ENCODE measurements at regions of chr12 and their contacts with region 1.

Region 1: DNA sequence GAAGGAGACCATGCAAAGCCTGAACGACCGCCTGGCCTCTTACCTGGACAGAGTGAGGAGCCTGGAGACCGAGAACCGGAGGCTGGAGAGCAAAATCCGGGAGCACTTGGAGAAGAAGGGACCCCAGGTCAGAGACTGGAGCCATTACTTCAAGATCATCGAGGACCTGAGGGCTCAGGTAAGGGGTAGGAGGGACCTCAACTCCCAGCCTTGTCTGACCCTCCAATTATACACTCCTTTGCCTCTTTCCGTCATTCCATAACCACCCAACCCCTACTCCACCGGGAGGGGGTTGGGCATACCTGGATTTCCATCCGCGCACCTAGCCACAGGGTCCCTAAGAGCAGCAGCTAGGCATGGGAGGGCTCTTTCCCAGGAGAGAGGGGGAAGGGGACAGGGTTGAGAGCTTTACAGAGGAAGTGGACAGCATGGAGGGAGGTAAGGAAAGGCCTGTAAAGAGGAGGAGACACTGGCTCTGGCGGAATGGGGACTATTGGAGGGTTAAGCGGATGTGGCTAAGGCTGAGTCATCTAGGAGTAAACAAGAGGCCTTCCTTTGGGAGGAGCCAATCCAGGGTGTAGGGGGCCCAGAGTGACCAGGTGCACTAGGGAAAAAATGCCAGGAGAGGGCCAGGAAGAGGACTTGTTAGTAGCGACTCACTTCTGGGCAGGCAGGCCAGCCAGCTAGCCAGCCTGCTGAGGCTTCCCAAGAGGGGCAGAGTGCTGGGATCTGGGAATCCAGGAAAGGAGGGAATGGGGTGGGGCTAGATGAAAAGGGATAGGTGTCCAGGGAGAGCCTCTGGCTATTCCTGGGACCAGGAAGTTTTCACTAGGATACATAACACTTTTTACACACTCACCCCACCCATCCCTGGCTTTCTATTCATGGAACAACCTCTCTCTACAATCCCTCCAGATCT is 754 bp downstream of the KRT18 start:
- DNase-seq: peak; percentile 83
- H3K4me3 Mint-ChIP-seq: peak overlapping the region; percentile 87
- H3K27ac Mint-ChIP-seq: peak overlapping the region; percentile 97
- H3K4me1 Mint-ChIP-seq: peaks cover 25% of the 10 kb centered on the region
- H3K27me3 Mint-ChIP-seq: no peaks in the 10 kb centered on the region
- CTCF ChIP-seq: no peak

Region 2: DNA sequence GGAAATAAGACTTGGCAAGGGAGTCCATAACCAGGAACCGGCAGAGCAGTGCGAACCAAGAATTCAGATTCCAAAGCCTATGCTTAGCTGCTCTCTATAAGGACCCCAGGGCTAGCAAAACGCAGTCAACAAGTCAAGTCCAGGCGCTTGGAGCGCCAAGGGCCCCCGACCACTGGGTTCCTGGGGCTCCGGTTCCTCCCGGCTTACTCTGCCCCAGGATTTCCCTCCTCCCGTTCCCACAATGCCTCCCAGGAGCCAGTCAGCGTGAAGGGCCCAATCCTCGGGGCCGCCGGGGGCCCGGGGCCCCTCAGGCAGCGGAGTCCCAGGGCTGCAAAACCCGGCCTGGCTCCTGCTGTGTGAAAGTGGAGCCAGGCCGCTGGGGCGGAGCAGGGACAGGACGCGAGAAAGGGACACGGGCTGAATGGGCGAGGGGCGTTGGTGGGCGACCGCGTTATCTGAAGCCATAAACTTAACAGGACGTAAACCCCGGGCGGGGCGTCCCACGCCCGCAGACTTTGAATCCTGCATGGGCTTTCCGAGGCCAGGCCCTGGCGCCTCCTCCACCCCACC is 46.3 kb before region 1 on chr12:
- CTCF ChIA-PET with region 1: interaction called, 10 read pairs
- intact Hi-C with region 1: loop called (anchors 2 kb)
- DNase-seq: no peak
- H3K4me3 Mint-ChIP-seq: peak overlapping the region; percentile 76
- H3K27ac Mint-ChIP-seq: peak overlapping the region; percentile 97
- H3K4me1 Mint-ChIP-seq: peaks cover 43% of the 10 kb centered on the region
- H3K27me3 Mint-ChIP-seq: no peaks in the 10 kb centered on the region
- CTCF ChIP-seq: no peak